ENCODE measurements at regions of chr6 and their contacts with region 1.

Region 1: DNA sequence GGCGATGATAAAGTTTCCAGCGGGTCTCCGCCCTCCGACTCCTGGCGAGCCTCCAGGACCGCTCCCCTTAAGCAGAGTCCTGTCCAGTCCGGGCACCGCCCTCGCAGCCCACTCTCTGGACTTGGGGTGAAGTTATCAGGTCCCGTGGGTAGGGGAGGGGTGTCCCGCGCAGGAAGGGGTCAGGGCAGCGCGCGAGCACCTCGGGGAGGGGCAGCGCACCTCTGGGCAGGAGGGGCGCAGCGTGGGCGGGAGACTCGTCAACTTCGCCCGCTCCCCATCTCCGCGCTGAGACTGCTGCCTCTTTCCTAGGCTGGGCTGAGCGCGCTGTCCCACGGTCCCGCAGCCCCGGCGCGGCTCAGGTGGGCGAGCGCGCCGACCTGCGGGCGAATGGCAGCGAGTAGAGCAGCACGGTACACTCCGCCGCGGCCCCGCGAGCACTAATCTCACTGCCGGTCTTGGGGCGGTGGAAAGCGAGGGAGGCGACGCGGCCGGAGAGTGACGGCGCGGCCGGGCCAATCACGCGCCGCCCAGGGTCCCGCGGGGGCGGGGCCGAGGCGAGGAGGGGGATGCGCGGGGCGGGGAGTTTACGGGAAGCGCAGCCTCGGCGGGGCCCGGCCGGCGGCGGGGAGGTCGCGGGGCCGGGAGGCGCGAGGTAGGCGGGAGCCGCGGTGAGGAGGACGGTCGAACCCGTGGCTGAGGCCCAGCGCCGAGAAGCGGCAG is at the start of gene MAN1A1:
- DNase-seq: peak; percentile 89
- ATAC-seq: peak; percentile 87
- H3K4me3 Mint-ChIP-seq: peak within 1 kb of the TSS; percentile 96
- H3K27ac Mint-ChIP-seq: peak within 1 kb of the TSS; percentile 91
- H3K4me1 Mint-ChIP-seq: peaks cover 47% of the 10 kb centered on the region
- H3K27me3 Mint-ChIP-seq: no peaks in the 10 kb centered on the region
- CTCF ChIP-seq: no peak
- total RNA-seq, gene MAN1A1: 18.5 to 19.4 TPM

Region 2: GRCh38 chr6:119147101-119148053 is 202.1 kb before region 1 on chr6:
- CTCF ChIA-PET with region 1: interaction called, 17 read pairs
- POLR2A ChIA-PET with region 1: interaction called, 5 read pairs
- intact Hi-C with region 1: loop called (anchors 5 kb)
- DNase-seq: peak; percentile 87
- ATAC-seq: peak; percentile 94
- H3K4me3 Mint-ChIP-seq: no peak overlapping the region
- H3K27ac Mint-ChIP-seq: peak overlapping the region; percentile 78
- H3K4me1 Mint-ChIP-seq: peaks cover 36% of the 10 kb centered on the region
- H3K27me3 Mint-ChIP-seq: peaks cover under 1% of the 10 kb centered on the region
- CTCF ChIP-seq: no peak

Region 3: DNA sequence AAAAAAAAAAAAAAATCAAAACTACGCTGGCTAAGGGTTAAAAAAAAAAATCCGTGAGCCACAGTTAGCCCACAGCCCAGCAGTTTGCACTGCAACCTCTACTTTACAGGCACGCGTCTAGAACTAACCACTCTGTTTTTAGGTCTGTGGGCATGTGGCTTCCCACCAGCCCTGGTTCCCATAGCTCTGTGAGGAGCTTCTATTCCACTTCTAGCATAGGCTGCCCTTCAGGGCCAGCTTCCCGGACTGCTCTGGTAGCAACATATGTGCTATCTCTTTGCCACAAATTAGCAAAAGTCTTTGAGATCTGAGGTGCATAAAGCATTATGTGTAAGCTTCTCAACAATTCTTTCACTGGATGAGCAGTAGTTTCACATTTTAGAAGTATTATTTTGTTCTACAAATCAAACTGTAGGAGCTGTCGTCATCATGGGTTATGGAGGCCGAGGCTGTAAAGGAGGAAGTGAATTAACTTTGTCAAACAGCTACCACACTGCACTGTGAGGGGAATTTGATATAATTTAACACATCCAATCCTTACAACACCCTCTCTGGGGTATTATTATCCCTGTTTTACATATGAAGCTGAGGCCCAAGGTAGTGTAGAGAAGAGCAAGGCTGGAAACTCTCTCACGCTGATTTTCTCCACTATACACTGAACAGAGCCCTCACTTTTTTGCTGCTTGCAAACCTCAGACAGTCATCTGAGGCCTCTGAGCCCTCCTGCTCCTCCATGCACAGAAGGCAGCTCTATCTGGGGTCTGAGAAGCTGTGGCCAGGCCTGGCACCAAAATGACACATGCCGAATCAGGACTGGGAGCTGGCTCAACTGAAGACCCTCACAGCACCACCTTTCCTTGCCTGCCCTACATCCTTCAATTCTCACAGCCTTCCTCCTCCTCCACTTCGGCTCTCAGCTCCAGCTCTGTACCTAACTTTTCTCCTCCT is 35.3 kb before region 1 on chr6:
- CTCF ChIA-PET with region 1: interaction called, 9 read pairs
- POLR2A ChIA-PET with region 1: interaction called, 29 read pairs
- intact Hi-C with region 1: loop called (anchors 2 kb)
- DNase-seq: peak; percentile 63
- ATAC-seq: peak; percentile 74
- H3K4me3 Mint-ChIP-seq: peak overlapping the region; percentile 66
- H3K27ac Mint-ChIP-seq: peak overlapping the region; percentile 94
- H3K4me1 Mint-ChIP-seq: peaks cover 58% of the 10 kb centered on the region
- H3K27me3 Mint-ChIP-seq: no peaks in the 10 kb centered on the region
- CTCF ChIP-seq: no peak

Region 4: DNA sequence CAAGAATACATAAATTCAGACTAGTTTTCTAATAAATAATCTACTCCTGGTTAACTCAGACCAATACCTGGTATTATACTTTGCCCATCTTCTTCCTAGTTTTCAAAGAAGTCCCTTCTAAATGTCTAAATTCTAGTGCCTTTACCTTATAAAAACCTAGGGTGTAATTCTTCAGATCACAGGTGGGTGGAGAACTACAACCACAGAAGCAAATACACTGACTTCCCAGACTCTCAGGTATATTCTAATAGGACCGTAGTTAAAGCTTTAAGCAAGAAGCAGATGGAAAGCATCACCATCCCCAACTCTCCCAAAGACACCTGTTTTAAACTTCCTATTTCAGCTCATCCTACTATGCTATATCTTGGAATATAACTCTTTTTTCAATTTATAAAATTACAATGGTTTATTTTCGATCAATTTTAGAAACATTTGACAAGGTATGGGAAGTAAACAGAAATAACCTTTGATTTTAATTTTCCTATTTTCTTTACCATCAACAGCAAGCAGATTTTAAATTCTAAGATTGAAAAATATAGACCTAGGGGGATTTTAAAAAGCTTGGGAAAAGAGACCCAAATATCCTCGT is 15.7 kb before region 1 on chr6:
- CTCF ChIA-PET with region 1: interaction called, 24 read pairs
- POLR2A ChIA-PET with region 1: interaction called, 10 read pairs
- intact Hi-C with region 1: no loop called
- DNase-seq: no peak
- ATAC-seq: peak; percentile 69
- H3K4me3 Mint-ChIP-seq: no peak overlapping the region
- H3K27ac Mint-ChIP-seq: no peak overlapping the region
- H3K4me1 Mint-ChIP-seq: peaks cover 40% of the 10 kb centered on the region
- H3K27me3 Mint-ChIP-seq: no peaks in the 10 kb centered on the region
- CTCF ChIP-seq: peak; percentile 64